ENCODE measurements at regions of chrX and their contacts with region 1.

Region 1: GRCh38 chrX:15789979-15790768 is at the start of gene ZRSR2:
- DNase-seq: peak; percentile 83
- H3K4me3 Mint-ChIP-seq: no peak within 1 kb of the TSS
- H3K27ac Mint-ChIP-seq: no peak within 1 kb of the TSS
- H3K4me1 Mint-ChIP-seq: peaks cover 18% of the 10 kb centered on the region
- H3K27me3 Mint-ChIP-seq: no peaks in the 10 kb centered on the region
- total RNA-seq, gene ZRSR2: 20.6 and 22.1 TPM in 2 replicates

Region 2: GRCh38 chrX:15335135-15336022 is 454.8 kb before region 1 on chrX and contains the start of gene PIGA:
- intact Hi-C with region 1: loop called (anchors 10 kb)
- DNase-seq: peak; percentile 89
- H3K4me3 Mint-ChIP-seq: peak within 1 kb of the TSS; percentile 91
- H3K27ac Mint-ChIP-seq: peak within 1 kb of the TSS; percentile 88
- H3K4me1 Mint-ChIP-seq: peaks cover 14% of the 10 kb centered on the region
- H3K27me3 Mint-ChIP-seq: no peaks in the 10 kb centered on the region
- total RNA-seq, gene PIGA: 23.9 and 25.4 TPM in 2 replicates

Region 3: GRCh38 chrX:15749642-15750610 is 40.2 kb before region 1 on chrX:
- intact Hi-C with region 1: loop called (anchors 1 kb)
- DNase-seq: no peak
- H3K4me3 Mint-ChIP-seq: peak overlapping the region; percentile 45
- H3K27ac Mint-ChIP-seq: peak overlapping the region; percentile 97
- H3K4me1 Mint-ChIP-seq: peaks cover 39% of the 10 kb centered on the region
- H3K27me3 Mint-ChIP-seq: no peaks in the 10 kb centered on the region

Region 4: DNA sequence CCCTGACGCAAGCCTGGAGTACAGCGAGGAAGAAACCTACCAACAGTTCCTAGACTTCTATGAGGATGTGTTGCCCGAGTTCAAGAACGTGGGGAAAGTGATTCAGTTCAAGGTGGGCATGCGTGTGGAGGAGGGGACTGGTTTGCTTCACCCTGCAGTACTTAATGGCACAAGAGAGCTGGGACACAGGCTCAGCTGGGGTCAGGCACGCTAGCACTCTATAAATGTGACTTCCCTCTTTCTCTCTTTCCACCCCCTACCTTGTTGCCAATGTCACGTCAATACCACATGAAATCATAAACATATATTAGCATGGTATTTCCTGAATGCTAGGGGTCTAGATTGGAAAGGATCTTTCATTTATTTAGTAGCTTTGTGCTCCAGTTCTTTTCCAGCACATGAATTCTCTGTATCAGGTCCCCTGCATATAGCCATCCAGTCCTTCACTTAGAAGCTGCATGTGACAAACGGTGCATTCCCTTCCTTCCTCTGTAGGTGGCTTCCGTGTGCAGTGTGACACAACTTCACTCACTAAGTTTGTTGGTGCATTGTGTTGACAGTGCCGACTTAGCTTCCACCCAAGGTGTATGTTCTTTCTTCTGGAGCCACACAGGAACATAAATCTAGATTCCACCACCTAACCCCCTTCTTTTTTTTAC is 25.7 kb after region 1 on chrX:
- intact Hi-C with region 1: loop called (anchors 1 kb)
- DNase-seq: peak; percentile 8
- H3K4me3 Mint-ChIP-seq: no peak overlapping the region
- H3K27ac Mint-ChIP-seq: peak overlapping the region; percentile 58
- H3K4me1 Mint-ChIP-seq: peaks cover 47% of the 10 kb centered on the region
- H3K27me3 Mint-ChIP-seq: no peaks in the 10 kb centered on the region

Region 5: DNA sequence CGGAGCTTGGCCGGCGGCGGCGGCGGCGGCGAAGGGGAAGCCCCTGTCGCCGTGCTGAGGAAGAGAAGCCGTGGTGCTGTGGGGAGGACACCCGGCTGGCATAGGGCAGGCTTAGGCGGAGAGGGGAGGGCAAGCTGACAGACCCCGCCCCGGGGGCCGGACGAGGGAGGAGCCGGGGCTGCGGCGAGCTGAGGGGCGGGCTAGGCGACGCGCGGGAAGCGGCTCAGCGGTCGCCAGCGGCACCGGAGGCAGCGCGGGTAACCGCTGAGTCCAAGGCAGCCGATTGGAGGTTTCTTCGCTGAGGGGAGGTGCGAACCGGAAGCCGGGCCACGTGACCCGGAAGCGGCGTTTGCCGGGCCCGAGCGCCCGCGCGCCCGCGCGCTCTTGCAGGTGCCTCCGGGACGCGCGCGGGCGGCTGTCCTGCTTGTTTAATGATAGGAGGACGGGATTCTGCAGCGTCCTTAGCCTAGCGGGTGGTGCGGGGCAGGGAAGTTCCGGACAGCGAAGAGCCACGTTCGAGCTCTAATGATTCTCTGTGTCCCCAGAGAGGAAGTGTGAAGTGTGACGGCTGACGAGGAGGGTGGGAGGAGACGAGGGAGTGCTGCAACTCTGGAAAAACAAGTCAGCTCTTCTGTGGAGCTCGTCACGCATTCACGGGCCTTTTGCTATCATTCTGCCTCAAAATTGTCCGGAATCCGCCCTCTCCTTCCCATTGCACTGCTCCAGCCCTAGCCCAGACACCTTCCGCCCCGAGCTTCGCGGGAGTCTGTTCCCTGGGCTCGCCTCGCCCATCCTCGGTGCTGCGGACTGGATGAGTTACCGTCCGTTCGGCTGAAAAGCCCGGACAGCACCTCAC is 64.8 kb after region 1 on chrX and contains the start of gene AP1S2:
- intact Hi-C with region 1: loop called (anchors 1 kb)
- DNase-seq: peak; percentile 89
- H3K4me3 Mint-ChIP-seq: peak within 1 kb of the TSS; percentile 88
- H3K27ac Mint-ChIP-seq: peak within 1 kb of the TSS; percentile 90
- H3K4me1 Mint-ChIP-seq: peaks cover 10% of the 10 kb centered on the region
- H3K27me3 Mint-ChIP-seq: no peaks in the 10 kb centered on the region
- total RNA-seq, gene AP1S2: 20.7 and 35.3 TPM in 2 replicates

Region 6: GRCh38 chrX:16719334-16720084 is 929.3 kb after region 1 on chrX and contains the start of gene SYAP1:
- intact Hi-C with region 1: loop called (anchors 1 kb)
- DNase-seq: peak; percentile 89
- H3K4me3 Mint-ChIP-seq: peak within 1 kb of the TSS; percentile 92
- H3K27ac Mint-ChIP-seq: peak within 1 kb of the TSS; percentile 94
- H3K4me1 Mint-ChIP-seq: peaks cover 16% of the 10 kb centered on the region
- H3K27me3 Mint-ChIP-seq: no peaks in the 10 kb centered on the region
- total RNA-seq, gene SYAP1: 19.5 and 19.7 TPM in 2 replicates